Kidney (tissue), 22 donors: ENCODE measurements at regions of chr14 and their contacts with region 1.

Region 1: DNA sequence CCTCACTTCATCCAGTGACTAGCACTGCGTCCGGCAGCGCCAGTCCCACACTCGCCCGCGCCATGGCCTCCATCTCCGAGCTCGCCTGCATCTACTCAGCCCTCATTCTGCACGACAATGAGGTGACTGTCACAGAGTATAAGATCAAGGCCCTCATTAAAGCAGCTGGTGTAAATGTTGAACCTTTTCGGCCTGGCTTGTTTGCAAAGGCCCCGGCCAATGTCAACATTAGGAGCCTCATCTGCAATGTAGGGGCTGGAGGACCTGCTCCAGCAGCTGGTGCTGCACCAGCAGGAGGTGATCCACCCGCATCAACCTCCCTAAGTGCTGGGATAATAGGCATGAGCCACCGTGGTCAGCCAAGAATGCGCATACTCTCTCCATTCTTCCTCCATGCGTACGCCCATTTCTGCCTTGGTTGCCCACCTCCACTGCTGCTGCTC is 59.9 kb downstream of the IRF2BPL start:
- DNase-seq: no peak
- H3K4me3 ChIP-seq: no peak overlapping the region
- H3K27ac ChIP-seq: no peak overlapping the region
- H3K4me1 ChIP-seq: peaks cover 0 to 3% (median 2%) of the 10 kb centered on the region in 3 donors
- H3K27me3 ChIP-seq: no peaks in the 10 kb centered on the region
- CTCF ChIP-seq: no peak

Region 2: GRCh38 chr14:76855066-76855465 is 113.6 kb before region 1 on chr14:
- intact Hi-C with region 1: no loop called
- DNase-seq: no peak
- H3K4me3 ChIP-seq: no peak overlapping the region
- H3K27ac ChIP-seq: no peak overlapping the region
- H3K4me1 ChIP-seq: no peaks in the 10 kb centered on the region
- H3K27me3 ChIP-seq: no peaks in the 10 kb centered on the region
- CTCF ChIP-seq: no peak

Region 3: DNA sequence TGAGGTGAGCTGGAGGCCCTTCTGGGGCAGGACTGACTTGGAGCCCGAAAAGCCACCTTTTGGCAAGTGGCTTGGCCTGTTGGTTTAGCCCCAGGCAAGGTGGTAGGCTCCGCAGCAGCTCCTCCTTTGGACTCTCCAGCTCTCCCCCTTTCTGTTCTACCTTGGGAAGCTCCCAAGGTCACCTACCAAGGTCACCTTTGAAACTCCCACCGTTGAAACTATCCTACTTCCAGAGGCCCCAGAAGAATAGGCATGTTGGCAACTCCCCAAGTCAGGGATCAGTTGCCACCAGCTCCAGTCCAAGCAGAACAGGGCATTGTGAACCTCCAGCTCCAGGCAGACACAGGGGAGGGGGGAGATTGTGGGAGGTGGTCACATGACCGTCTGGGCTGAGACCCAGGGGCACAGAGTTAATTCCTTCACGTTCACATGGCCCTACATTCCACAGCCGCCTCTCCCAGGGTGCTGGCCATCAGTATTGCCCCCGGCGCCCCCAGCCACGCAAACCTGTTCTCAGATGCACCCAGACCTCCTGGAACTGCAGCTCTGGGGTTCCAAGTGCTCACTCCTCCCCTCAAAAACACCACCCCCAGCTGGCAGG is 45.5 kb after region 1 on chr14:
- intact Hi-C with region 1: loop called (anchors 10 kb)
- DNase-seq: peak; percentile 93 to 96 (median 94)
- H3K4me3 ChIP-seq: no peak overlapping the region
- H3K27ac ChIP-seq: peak overlapping the region; percentile 86 to 92
- H3K4me1 ChIP-seq: peaks cover 2 to 29% (median 28%) of the 10 kb centered on the region in 3 donors
- H3K27me3 ChIP-seq: no peaks in the 10 kb centered on the region
- CTCF ChIP-seq: no peak